CD8-positive, alpha-beta T cell (primary cell): ENCODE measurements at regions of chr1 and their contacts with region 1.

Region 1: DNA sequence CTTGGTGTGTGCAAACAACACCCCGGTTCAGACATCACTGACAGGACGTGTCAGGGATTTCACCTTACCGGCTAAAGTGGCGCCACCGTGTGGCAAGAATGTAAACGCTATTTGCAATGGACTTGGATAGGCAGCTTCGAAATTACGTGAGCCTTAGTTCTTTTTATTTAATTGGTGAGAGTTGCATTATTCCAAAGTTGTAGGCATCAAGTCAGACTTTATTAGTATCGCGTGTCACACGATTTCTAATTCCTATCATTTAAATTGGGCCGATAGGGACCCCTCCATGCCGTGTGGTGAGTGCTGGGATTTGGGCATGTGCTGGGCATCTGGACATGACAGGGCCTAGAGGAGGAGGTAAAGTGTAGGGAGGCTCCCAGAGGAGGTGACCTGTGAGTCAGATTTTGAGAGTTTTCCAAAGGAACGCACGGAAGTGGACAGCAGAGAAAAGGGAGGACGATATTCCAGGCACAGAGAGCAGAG is 14.5 kb upstream of the CPT2 start:
- DNase-seq: peak; percentile 58 to 87 (median 83)
- ATAC-seq: peak; percentile 92
- H3K4me3 ChIP-seq: no peak overlapping the region
- H3K4me3 Mint-ChIP-seq: no peak overlapping the region
- H3K27ac ChIP-seq: no peak overlapping the region
- H3K27ac Mint-ChIP-seq: no peak overlapping the region
- H3K4me1 ChIP-seq: peaks cover 5% of the 10 kb centered on the region
- H3K4me1 Mint-ChIP-seq: no peaks in the 10 kb centered on the region
- H3K27me3 ChIP-seq: no peaks in the 10 kb centered on the region
- H3K27me3 Mint-ChIP-seq: peaks cover 5% of the 10 kb centered on the region
- CTCF ChIP-seq: peak; percentile 99

Region 2: GRCh38 chr1:51897699-51898031 is 1284.5 kb before region 1 on chr1:
- CTCF ChIA-PET with region 1: no interaction called
- POLR2A ChIA-PET with region 1: no interaction called
- intact Hi-C with region 1: loop called in 1 of 2 experiments (anchors 2 kb)
- DNase-seq: no peak
- ATAC-seq: no peak
- H3K4me3 ChIP-seq: no peak overlapping the region
- H3K4me3 Mint-ChIP-seq: no peak overlapping the region
- H3K27ac ChIP-seq: no peak overlapping the region
- H3K27ac Mint-ChIP-seq: no peak overlapping the region
- H3K4me1 ChIP-seq: no peaks in the 10 kb centered on the region
- H3K4me1 Mint-ChIP-seq: no peaks in the 10 kb centered on the region
- H3K27me3 ChIP-seq: peaks cover 0 to 2% of the 10 kb centered on the region in 2 experiments
- H3K27me3 Mint-ChIP-seq: peaks cover 49% of the 10 kb centered on the region
- CTCF ChIP-seq: no peak

Region 3: GRCh38 chr1:52662645-52663313 is 519.4 kb before region 1 on chr1:
- CTCF ChIA-PET with region 1: no interaction called
- POLR2A ChIA-PET with region 1: no interaction called
- intact Hi-C with region 1: no loop called
- DNase-seq: no peak
- ATAC-seq: no peak
- H3K4me3 ChIP-seq: no peak overlapping the region
- H3K4me3 Mint-ChIP-seq: no peak overlapping the region
- H3K27ac ChIP-seq: no peak overlapping the region
- H3K27ac Mint-ChIP-seq: peak overlapping the region; percentile 73
- H3K4me1 ChIP-seq: no peaks in the 10 kb centered on the region
- H3K4me1 Mint-ChIP-seq: peaks cover 10% of the 10 kb centered on the region
- H3K27me3 ChIP-seq: no peaks in the 10 kb centered on the region
- H3K27me3 Mint-ChIP-seq: no peaks in the 10 kb centered on the region
- CTCF ChIP-seq: no peak

Region 4: DNA sequence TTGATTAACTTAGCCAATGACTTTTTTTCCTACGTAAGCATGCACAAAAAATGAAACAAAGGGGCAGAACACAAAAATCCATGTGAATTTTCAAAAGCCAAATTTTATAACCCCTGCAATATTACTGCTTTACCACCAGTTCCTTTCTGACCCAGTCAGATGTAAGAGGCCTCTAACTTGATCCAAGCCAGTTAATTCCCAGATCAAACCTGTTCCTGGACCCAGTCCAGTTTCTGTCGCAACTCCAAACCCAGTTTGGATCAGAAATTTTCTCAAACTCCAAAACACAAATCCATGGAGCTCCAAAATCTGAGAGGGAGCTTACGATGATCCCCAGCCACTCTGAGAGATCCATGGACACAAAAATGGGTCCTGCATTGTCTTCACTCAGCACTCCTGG is 347.4 kb before region 1 on chr1:
- CTCF ChIA-PET with region 1: no interaction called
- POLR2A ChIA-PET with region 1: no interaction called
- intact Hi-C with region 1: no loop called
- DNase-seq: no peak
- ATAC-seq: no peak
- H3K4me3 ChIP-seq: no peak overlapping the region
- H3K4me3 Mint-ChIP-seq: no peak overlapping the region
- H3K27ac ChIP-seq: no peak overlapping the region
- H3K27ac Mint-ChIP-seq: no peak overlapping the region
- H3K4me1 ChIP-seq: no peaks in the 10 kb centered on the region
- H3K4me1 Mint-ChIP-seq: no peaks in the 10 kb centered on the region
- H3K27me3 ChIP-seq: peaks cover 0 to 2% of the 10 kb centered on the region in 2 experiments
- H3K27me3 Mint-ChIP-seq: peaks cover 9% of the 10 kb centered on the region
- CTCF ChIP-seq: no peak

Region 5: GRCh38 chr1:52904927-52905698 is 277.0 kb before region 1 on chr1:
- CTCF ChIA-PET with region 1: interaction called, 4 read pairs
- POLR2A ChIA-PET with region 1: no interaction called
- intact Hi-C with region 1: loop called in 1 of 2 experiments (anchors 1 kb)
- DNase-seq: peak in 6 of 9 experiments; percentile 33 to 57 (median 47)
- ATAC-seq: peak; percentile 76
- H3K4me3 ChIP-seq: no peak overlapping the region
- H3K4me3 Mint-ChIP-seq: no peak overlapping the region
- H3K27ac ChIP-seq: no peak overlapping the region
- H3K27ac Mint-ChIP-seq: no peak overlapping the region
- H3K4me1 ChIP-seq: no peaks in the 10 kb centered on the region
- H3K4me1 Mint-ChIP-seq: no peaks in the 10 kb centered on the region
- H3K27me3 ChIP-seq: no peaks in the 10 kb centered on the region
- H3K27me3 Mint-ChIP-seq: no peaks in the 10 kb centered on the region
- CTCF ChIP-seq: no peak

Region 6: DNA sequence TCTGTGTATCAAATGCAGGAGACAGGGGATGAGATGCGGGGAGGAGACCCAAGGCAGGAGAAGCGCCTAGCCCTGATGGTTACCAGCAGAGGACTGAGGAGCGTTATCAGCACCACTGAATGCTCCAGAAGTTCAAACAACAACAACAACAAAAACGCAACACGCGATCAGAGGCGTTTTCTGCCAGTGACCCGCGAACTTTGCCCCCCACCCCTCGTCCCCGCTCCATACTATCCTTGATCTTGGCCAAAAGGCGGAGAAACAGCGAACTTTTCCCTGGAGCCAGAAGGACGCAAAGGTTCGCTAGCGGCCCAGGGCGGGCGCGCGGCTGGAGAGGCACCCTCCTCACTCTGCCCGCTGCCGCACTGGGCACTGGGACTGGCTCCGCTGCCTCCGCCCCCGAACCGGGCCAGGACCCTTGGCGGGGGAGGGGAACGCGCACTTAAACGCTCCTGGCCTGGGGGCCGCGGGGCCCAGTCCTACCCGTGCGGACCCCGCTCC is 261.3 kb before region 1 on chr1:
- CTCF ChIA-PET with region 1: interaction called, 3 read pairs
- POLR2A ChIA-PET with region 1: no interaction called
- intact Hi-C with region 1: loop called in 1 of 2 experiments (anchors 5 kb)
- DNase-seq: peak in 1 of 9 experiments; percentile 33
- ATAC-seq: no peak
- H3K4me3 ChIP-seq: peak overlapping the region; percentile 18 to 60
- H3K4me3 Mint-ChIP-seq: peak overlapping the region; percentile 69
- H3K27ac ChIP-seq: peak overlapping the region; percentile 32 to 78
- H3K27ac Mint-ChIP-seq: peak overlapping the region; percentile 60
- H3K4me1 ChIP-seq: peaks cover 21% of the 10 kb centered on the region
- H3K4me1 Mint-ChIP-seq: peaks cover 31% of the 10 kb centered on the region
- H3K27me3 ChIP-seq: no peaks in the 10 kb centered on the region
- H3K27me3 Mint-ChIP-seq: no peaks in the 10 kb centered on the region
- CTCF ChIP-seq: no peak